ENCODE measurements at regions of chrX and their contacts with region 1.

Region 1: DNA sequence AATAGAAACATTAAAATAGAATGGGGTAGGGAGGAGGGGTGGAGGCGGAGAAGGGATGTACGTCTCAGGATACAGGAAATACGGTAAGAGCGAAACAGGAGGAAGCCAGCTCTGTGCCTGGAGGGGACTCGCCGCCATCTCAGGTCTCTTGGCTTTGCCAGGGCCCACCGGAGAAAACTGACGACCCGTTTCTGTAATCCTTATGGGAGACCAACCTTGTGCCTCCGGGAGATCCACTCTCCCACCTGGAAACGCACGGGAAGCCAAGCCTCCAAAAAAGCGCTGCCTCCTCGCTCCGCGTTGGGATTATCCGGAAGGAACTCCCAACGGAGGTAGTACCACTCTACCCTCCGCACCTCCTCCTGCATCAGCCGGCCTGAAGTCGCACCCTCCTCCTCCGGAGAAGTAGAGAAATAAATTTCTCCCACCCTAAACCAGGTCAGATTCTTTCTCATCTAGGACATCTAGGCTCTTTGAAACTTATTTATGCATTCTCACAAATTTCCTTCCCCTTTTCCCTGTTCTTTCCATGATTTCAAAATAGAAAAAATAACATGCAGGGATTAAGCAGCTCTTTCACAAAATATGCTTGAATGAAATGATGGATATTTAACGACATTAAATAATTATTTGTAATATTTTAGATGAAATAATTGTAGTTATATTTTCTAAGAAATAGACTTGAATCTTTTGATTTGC is at the start of gene NBDY:
- DNase-seq: peak; percentile 1 to 71 (median 33)
- ATAC-seq: peak; percentile 84
- H3K4me3 ChIP-seq: peak within 1 kb of the TSS; percentile 72 to 85
- H3K4me3 Mint-ChIP-seq: peak within 1 kb of the TSS; percentile 92
- H3K27ac ChIP-seq: peak within 1 kb of the TSS; percentile 85 to 88
- H3K27ac Mint-ChIP-seq: peak within 1 kb of the TSS; percentile 93
- H3K4me1 ChIP-seq: peaks cover 4% of the 10 kb centered on the region
- H3K4me1 Mint-ChIP-seq: peaks cover 37% of the 10 kb centered on the region
- H3K27me3 ChIP-seq: no peaks in the 10 kb centered on the region
- H3K27me3 Mint-ChIP-seq: no peaks in the 10 kb centered on the region
- CTCF ChIP-seq: no peak
- total RNA-seq, gene NBDY: 20.6 to 22.5 TPM

Region 2: DNA sequence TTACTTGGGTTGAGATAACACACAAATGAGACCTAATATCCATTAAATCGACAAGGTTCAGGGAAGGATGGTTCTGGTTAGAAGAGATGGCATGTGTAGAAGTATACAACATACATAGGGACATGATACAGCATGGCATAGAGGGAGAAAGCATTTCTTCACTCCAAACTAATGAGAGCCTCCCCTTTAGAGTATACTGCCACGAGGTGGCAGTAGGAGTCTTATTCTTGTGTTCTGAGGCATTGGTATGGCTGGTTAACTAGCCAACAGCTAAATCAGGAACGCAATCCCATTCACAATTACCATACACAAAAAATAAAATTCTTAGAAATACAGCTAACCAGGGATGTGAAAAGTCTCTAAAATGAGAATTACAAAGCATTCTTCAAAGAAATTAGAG is 1837.7 kb before region 1 on chrX:
- CTCF ChIA-PET with region 1: no interaction called
- POLR2A ChIA-PET with region 1: no interaction called
- intact Hi-C with region 1: loop called in 1 of 2 experiments (anchors 5 kb)
- DNase-seq: peak in 8 of 9 experiments; percentile 1 to 67 (median 25)
- ATAC-seq: peak; percentile 38
- H3K4me3 ChIP-seq: no peak overlapping the region
- H3K4me3 Mint-ChIP-seq: no peak overlapping the region
- H3K27ac ChIP-seq: no peak overlapping the region
- H3K27ac Mint-ChIP-seq: no peak overlapping the region
- H3K4me1 ChIP-seq: no peaks in the 10 kb centered on the region
- H3K4me1 Mint-ChIP-seq: no peaks in the 10 kb centered on the region
- H3K27me3 ChIP-seq: no peaks in the 10 kb centered on the region
- H3K27me3 Mint-ChIP-seq: peaks cover 12% of the 10 kb centered on the region
- CTCF ChIP-seq: peak; percentile 18

Region 3: GRCh38 chrX:56281789-56282188 is 447.5 kb before region 1 on chrX:
- CTCF ChIA-PET with region 1: interaction called, 98 read pairs
- POLR2A ChIA-PET with region 1: interaction called, 11 read pairs
- intact Hi-C with region 1: loop called (anchors 1 kb)
- DNase-seq: peak in 4 of 9 experiments; percentile 6 to 68 (median 30)
- ATAC-seq: no peak
- H3K4me3 ChIP-seq: no peak overlapping the region
- H3K4me3 Mint-ChIP-seq: no peak overlapping the region
- H3K27ac ChIP-seq: no peak overlapping the region
- H3K27ac Mint-ChIP-seq: no peak overlapping the region
- H3K4me1 ChIP-seq: peaks cover 6% of the 10 kb centered on the region
- H3K4me1 Mint-ChIP-seq: peaks cover 8% of the 10 kb centered on the region
- H3K27me3 ChIP-seq: no peaks in the 10 kb centered on the region
- H3K27me3 Mint-ChIP-seq: no peaks in the 10 kb centered on the region
- CTCF ChIP-seq: peak; percentile 43

Region 4: GRCh38 chrX:56744996-56745395 is 15.7 kb after region 1 on chrX:
- CTCF ChIA-PET with region 1: no interaction called
- POLR2A ChIA-PET with region 1: no interaction called
- intact Hi-C with region 1: no loop called
- DNase-seq: no peak
- ATAC-seq: no peak
- H3K4me3 ChIP-seq: no peak overlapping the region
- H3K4me3 Mint-ChIP-seq: no peak overlapping the region
- H3K27ac ChIP-seq: no peak overlapping the region
- H3K27ac Mint-ChIP-seq: no peak overlapping the region
- H3K4me1 ChIP-seq: no peaks in the 10 kb centered on the region
- H3K4me1 Mint-ChIP-seq: peaks cover 48% of the 10 kb centered on the region
- H3K27me3 ChIP-seq: no peaks in the 10 kb centered on the region
- H3K27me3 Mint-ChIP-seq: no peaks in the 10 kb centered on the region
- CTCF ChIP-seq: no peak

Region 5: DNA sequence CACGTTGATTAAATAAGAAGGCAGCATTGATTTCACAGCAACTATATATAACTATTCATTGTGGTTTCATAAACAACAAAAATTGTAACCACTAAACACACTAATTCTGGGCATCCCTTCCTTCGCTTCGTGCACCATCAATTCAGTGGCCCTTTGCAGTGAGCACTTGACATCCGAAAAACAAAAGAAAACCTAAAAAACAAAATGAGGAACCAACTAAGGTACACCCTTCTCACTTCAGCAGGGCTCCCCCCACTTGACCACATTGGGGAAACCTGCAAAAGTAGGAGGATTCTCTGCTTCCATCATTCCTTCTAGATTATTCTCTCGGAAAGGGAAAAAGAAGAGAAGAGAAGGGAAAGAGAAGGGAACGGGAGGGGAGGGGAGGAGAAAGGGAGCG is 28.0 kb after region 1 on chrX:
- CTCF ChIA-PET with region 1: no interaction called
- POLR2A ChIA-PET with region 1: no interaction called
- intact Hi-C with region 1: no loop called
- DNase-seq: no peak
- ATAC-seq: no peak
- H3K4me3 ChIP-seq: no peak overlapping the region
- H3K4me3 Mint-ChIP-seq: no peak overlapping the region
- H3K27ac ChIP-seq: no peak overlapping the region
- H3K27ac Mint-ChIP-seq: no peak overlapping the region
- H3K4me1 ChIP-seq: peaks cover 8% of the 10 kb centered on the region
- H3K4me1 Mint-ChIP-seq: peaks cover 33% of the 10 kb centered on the region
- H3K27me3 ChIP-seq: no peaks in the 10 kb centered on the region
- H3K27me3 Mint-ChIP-seq: no peaks in the 10 kb centered on the region
- CTCF ChIP-seq: no peak

Region 6: GRCh38 chrX:56978172-56978571 is 248.9 kb after region 1 on chrX:
- CTCF ChIA-PET with region 1: interaction called, 6 read pairs
- POLR2A ChIA-PET with region 1: no interaction called
- intact Hi-C with region 1: loop called in 1 of 2 experiments (anchors 5 kb)
- DNase-seq: peak in 8 of 9 experiments; percentile 5 to 69 (median 35)
- ATAC-seq: peak; percentile 88
- H3K4me3 ChIP-seq: no peak overlapping the region
- H3K4me3 Mint-ChIP-seq: no peak overlapping the region
- H3K27ac ChIP-seq: no peak overlapping the region
- H3K27ac Mint-ChIP-seq: no peak overlapping the region
- H3K4me1 ChIP-seq: no peaks in the 10 kb centered on the region
- H3K4me1 Mint-ChIP-seq: peaks cover 3% of the 10 kb centered on the region
- H3K27me3 ChIP-seq: no peaks in the 10 kb centered on the region
- H3K27me3 Mint-ChIP-seq: no peaks in the 10 kb centered on the region
- CTCF ChIP-seq: peak; percentile 66

Region 7: GRCh38 chrX:57422289-57422688 is 693.0 kb after region 1 on chrX:
- CTCF ChIA-PET with region 1: no interaction called
- POLR2A ChIA-PET with region 1: no interaction called
- intact Hi-C with region 1: no loop called
- DNase-seq: no peak
- ATAC-seq: no peak
- H3K4me3 ChIP-seq: no peak overlapping the region
- H3K4me3 Mint-ChIP-seq: no peak overlapping the region
- H3K27ac ChIP-seq: no peak overlapping the region
- H3K27ac Mint-ChIP-seq: no peak overlapping the region
- H3K4me1 ChIP-seq: no peaks in the 10 kb centered on the region
- H3K4me1 Mint-ChIP-seq: no peaks in the 10 kb centered on the region
- H3K27me3 ChIP-seq: no peaks in the 10 kb centered on the region
- H3K27me3 Mint-ChIP-seq: no peaks in the 10 kb centered on the region
- CTCF ChIP-seq: no peak

Region 8: GRCh38 chrX:57900975-57901374 is 1171.7 kb after region 1 on chrX:
- CTCF ChIA-PET with region 1: no interaction called
- POLR2A ChIA-PET with region 1: no interaction called
- intact Hi-C with region 1: loop called in 1 of 2 experiments (anchors 10 kb)
- DNase-seq: no peak
- ATAC-seq: no peak
- H3K4me3 ChIP-seq: no peak overlapping the region
- H3K4me3 Mint-ChIP-seq: no peak overlapping the region
- H3K27ac ChIP-seq: no peak overlapping the region
- H3K27ac Mint-ChIP-seq: no peak overlapping the region
- H3K4me1 ChIP-seq: no peaks in the 10 kb centered on the region
- H3K4me1 Mint-ChIP-seq: peaks cover 11% of the 10 kb centered on the region
- H3K27me3 ChIP-seq: no peaks in the 10 kb centered on the region
- H3K27me3 Mint-ChIP-seq: no peaks in the 10 kb centered on the region
- CTCF ChIP-seq: no peak

Measured in CD8-positive, alpha-beta T cell (primary cell).